Panc1 (cell line): ENCODE measurements at regions of chr4 and their contacts with region 1.

Region 1: GRCh38 chr4:38983787-38984598 is 48.2 kb downstream of the TMEM156 start:
- DNase-seq: no peak
- ATAC-seq: no peak
- H3K4me3 ChIP-seq: no peak overlapping the region
- H3K27ac ChIP-seq: no peak overlapping the region
- H3K4me1 ChIP-seq: no peaks in the 10 kb centered on the region
- H3K27me3 ChIP-seq: no peaks in the 10 kb centered on the region
- CTCF ChIP-seq: no peak

Region 2: DNA sequence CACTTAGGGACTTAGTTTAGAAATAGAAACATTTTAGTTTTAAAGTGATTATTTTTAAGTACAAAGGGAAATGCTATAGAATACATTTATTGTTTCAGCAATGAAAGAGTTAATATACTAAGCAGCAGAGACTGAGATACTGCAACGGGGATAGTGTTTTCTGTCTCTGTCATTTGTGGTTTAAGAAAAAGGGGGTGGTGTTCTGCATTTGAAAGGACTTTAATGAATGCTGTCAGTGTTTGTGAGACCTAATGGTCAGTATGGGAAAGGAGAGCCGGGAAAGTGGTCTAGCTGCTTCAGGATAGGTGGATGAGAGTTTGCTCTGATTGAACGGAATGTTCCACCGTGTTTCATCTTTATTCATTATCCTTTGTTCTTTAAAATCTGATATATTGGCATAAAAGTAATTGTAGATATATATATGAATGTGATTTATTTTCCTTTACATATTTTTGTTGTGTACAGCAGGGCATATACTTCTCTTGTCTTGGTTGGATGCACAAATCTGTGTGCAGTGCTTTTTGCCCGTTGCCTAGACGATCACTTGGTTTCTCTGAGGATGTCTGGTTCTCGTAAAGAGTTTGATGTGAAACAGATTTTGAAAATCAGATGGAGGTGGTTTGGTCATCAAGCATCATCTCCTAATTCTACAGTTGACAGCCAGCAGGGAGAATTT is 78.2 kb after region 1 on chr4 and contains the start of gene KLHL5:
- CTCF ChIA-PET with region 1: no interaction called
- POLR2A ChIA-PET with region 1: interaction called, 10 read pairs
- in situ Hi-C with region 1: no loop called
- intact Hi-C with region 1: no loop called
- DNase-seq: no peak
- ATAC-seq: peak; percentile 75
- H3K4me3 ChIP-seq: no peak within 1 kb of the TSS; a peak in 1 of 4 replicates
- H3K27ac ChIP-seq: no peak within 1 kb of the TSS
- H3K4me1 ChIP-seq: peaks cover 18% of the 10 kb centered on the region
- H3K27me3 ChIP-seq: no peaks in the 10 kb centered on the region
- CTCF ChIP-seq: no peak
- total RNA-seq, gene KLHL5: 128 TPM

Region 3: DNA sequence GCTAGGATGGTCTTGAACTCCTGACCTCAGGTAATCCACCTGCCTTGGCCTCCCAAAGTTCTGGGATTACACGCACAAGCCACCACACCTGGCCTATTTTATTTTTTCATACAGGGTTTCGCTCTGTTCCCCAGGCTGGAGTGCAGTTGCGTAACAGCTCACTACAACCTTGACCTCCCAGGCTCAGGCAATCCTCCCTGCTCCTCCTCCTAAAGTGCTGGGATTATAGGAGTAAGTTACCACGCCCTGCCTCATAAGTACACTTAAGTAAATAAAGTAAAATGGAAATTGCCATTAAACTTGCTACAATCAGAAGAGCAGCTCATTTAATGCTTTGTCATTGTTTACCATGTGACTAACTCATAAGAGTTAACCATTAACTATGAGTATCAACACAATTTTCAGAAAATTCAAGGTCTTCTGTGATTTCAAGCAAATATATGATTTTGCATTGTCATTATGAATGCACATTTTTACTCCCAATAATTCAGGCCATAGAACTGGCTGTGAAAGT is 531.0 kb after region 1 on chr4:
- CTCF ChIA-PET with region 1: no interaction called
- POLR2A ChIA-PET with region 1: no interaction called
- in situ Hi-C with region 1: no loop called
- intact Hi-C with region 1: no loop called
- DNase-seq: peak; percentile 59
- ATAC-seq: peak; percentile 62; the same call in 1 of the 2 replicates
- H3K4me3 ChIP-seq: no peak overlapping the region
- H3K27ac ChIP-seq: 0 out of 2 replicates have a peak overlapping the region, but pooled peaks have one; percentile 51
- H3K4me1 ChIP-seq: peaks cover 3% of the 10 kb centered on the region; the same call in 1 of the 2 replicates
- H3K27me3 ChIP-seq: no peaks in the 10 kb centered on the region
- CTCF ChIP-seq: no peak